Activated B cell treated with CpG ODN at 0.5 μM for 24 hours (primary cell): ENCODE measurements at regions of chr11 and their contacts with region 1.

Region 1: GRCh38 chr11:128530118-128531074 is 57.0 kb downstream of the ETS1 start:
- DNase-seq: no peak
- ATAC-seq: no peak
- H3K4me3 Mint-ChIP-seq: no peak overlapping the region
- H3K27ac Mint-ChIP-seq: no peak overlapping the region
- H3K4me1 Mint-ChIP-seq: peaks cover 18% of the 10 kb centered on the region
- H3K27me3 Mint-ChIP-seq: no peaks in the 10 kb centered on the region
- CTCF ChIP-seq: no peak

Region 2: GRCh38 chr11:128379587-128380580 is 150.5 kb before region 1 on chr11:
- CTCF ChIA-PET with region 1: no interaction called
- POLR2A ChIA-PET with region 1: no interaction called
- intact Hi-C with region 1: no loop called
- DNase-seq: no peak
- ATAC-seq: no peak
- H3K4me3 Mint-ChIP-seq: no peak overlapping the region
- H3K27ac Mint-ChIP-seq: no peak overlapping the region
- H3K4me1 Mint-ChIP-seq: peaks cover 4% of the 10 kb centered on the region
- H3K27me3 Mint-ChIP-seq: no peaks in the 10 kb centered on the region
- CTCF ChIP-seq: no peak

Region 3: GRCh38 chr11:128467610-128468041 is 62.8 kb before region 1 on chr11:
- CTCF ChIA-PET with region 1: no interaction called
- POLR2A ChIA-PET with region 1: no interaction called
- intact Hi-C with region 1: no loop called
- DNase-seq: no peak
- ATAC-seq: no peak
- H3K4me3 Mint-ChIP-seq: peak overlapping the region; percentile 33
- H3K27ac Mint-ChIP-seq: peak overlapping the region; percentile 89
- H3K4me1 Mint-ChIP-seq: peaks cover 100% of the 10 kb centered on the region
- H3K27me3 Mint-ChIP-seq: no peaks in the 10 kb centered on the region
- CTCF ChIP-seq: no peak

Region 4: GRCh38 chr11:128544471-128545051 is 14.2 kb after region 1 on chr11:
- CTCF ChIA-PET with region 1: no interaction called
- POLR2A ChIA-PET with region 1: interaction called, 11 read pairs
- intact Hi-C with region 1: no loop called
- DNase-seq: no peak
- ATAC-seq: no peak
- H3K4me3 Mint-ChIP-seq: peak overlapping the region; percentile 9
- H3K27ac Mint-ChIP-seq: no peak overlapping the region
- H3K4me1 Mint-ChIP-seq: peaks cover 41% of the 10 kb centered on the region
- H3K27me3 Mint-ChIP-seq: no peaks in the 10 kb centered on the region
- CTCF ChIP-seq: no peak